Motor neuron (in vitro differentiated cells): ENCODE measurements at regions of chr3 and their contacts with region 1.

Region 1: DNA sequence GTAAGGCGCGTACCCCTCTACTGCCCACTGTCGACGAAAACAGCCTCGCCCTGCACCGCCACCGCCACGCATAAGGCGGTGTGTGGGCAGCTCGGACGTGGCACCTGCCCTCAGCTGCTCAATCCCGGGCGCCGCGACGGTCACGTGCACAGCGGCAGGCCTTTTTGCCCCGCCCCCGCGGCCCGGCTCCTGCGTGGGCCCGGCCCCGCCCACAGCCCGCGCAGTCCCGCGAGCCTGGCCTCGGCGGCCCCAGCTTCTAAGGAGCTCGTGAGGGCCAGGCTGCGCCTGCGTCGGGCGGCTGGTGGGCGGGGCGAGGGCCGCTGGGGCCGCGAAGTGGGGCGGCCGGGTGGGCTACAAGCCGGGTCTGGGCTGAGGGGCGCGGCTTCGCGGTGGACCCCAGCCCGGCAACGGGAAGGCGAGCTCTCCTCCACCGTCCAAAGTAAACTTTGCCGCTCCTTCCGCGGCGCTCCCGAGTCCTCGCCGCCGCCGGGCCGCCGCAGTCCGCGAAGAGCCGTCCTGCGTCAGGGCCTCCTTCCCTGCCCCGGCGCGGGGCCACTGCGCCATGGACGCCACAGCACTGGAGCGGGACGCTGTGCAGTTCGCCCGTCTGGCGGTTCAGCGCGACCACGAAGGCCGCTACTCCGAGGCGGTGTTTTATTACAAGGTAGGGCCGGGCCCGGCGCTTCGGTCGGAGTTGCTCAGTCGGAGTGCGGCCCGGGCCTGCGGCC is at the start of gene CAPN7:
- ATAC-seq: peak; percentile 88 to 94 (median 92)
- H3K4me3 ChIP-seq: peak within 1 kb of the TSS; percentile 75 to 91 (median 80)
- H3K27ac ChIP-seq: peak within 1 kb of the TSS; percentile 88 to 94
- H3K4me1 ChIP-seq: peaks cover 5 to 7% of the 10 kb centered on the region in 2 donors
- total RNA-seq, gene CAPN7: 23.4 to 44.3 (median 32.6) TPM

Region 2: GRCh38 chr3:15309662-15310335 is 103.7 kb after region 1 on chr3:
- in situ Hi-C with region 1: no loop called
- ATAC-seq: peak in 2 of 8 experiments; percentile 2 to 4
- H3K4me3 ChIP-seq: no peak overlapping the region
- H3K27ac ChIP-seq: no peak overlapping the region
- H3K4me1 ChIP-seq: peaks cover 0 to 16% of the 10 kb centered on the region in 2 donors

Region 3: DNA sequence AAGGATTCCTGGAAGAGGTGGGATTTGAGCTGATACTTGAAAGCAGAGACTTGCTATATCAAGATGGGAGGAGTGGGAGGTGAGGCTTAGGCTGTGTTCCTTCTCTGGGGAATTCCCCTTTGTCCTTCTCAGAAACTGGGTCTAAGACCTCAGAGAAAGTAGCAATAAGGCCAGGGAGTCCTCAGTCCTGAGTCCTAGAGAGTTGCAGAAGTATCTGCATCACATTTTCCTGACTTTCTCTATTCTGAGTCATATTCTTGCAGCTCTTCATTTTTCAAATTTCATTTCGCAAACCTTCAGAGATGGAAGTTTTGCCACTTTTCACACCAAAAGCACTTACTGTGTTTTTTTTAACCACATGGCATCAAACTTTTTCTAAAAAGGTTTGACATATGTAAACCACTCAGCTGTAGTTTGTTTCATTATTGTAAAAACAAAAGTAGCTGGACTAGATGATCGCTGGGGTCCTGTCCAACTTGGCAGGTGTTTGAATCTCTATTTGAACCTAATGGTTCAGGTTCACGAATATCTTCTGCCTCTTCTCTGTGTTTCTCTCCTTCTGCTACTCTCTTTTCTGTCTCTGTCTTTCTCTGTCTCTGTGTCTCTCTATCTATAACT is 294.1 kb after region 1 on chr3:
- in situ Hi-C with region 1: no loop called
- ATAC-seq: peak in 2 of 8 experiments; percentile 14 to 50
- H3K4me3 ChIP-seq: no peak overlapping the region
- H3K27ac ChIP-seq: no peak overlapping the region
- H3K4me1 ChIP-seq: peaks cover 19 to 28% of the 10 kb centered on the region in 2 donors

Region 4: GRCh38 chr3:15585111-15585845 is 379.2 kb after region 1 on chr3:
- in situ Hi-C with region 1: loop called in 1 of 9 experiments (anchors 25 kb)
- ATAC-seq: no peak
- H3K4me3 ChIP-seq: no peak overlapping the region
- H3K27ac ChIP-seq: no peak overlapping the region
- H3K4me1 ChIP-seq: no peaks in the 10 kb centered on the region